OCI-LY7 (cell line): ENCODE measurements at regions of chr17 and their contacts with region 1.

Region 1: DNA sequence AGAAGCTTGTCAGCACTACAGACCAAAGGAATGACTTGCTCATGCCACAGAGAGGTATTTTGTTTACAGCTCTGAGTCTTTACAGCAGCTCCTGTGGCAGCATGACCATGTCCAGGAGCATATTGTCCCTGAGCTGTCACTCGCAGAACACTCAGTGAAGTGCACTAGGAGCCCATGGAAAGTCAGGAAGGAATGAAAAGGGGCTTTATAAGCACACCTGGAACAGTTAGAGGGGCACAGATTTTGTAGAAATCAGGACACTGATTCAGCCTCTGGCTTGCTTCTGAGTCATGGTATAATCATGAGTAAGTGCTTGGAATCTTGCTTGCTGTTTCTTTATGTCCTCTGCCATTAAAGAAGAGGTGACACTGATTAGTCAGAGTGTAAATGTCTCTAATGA is 41.0 kb downstream of the TADA2A start:
- DNase-seq: no peak
- H3K4me3 ChIP-seq: no peak overlapping the region
- H3K27ac ChIP-seq: no peak overlapping the region
- H3K4me1 ChIP-seq: no peaks in the 10 kb centered on the region
- CTCF ChIP-seq: no peak

Region 2: DNA sequence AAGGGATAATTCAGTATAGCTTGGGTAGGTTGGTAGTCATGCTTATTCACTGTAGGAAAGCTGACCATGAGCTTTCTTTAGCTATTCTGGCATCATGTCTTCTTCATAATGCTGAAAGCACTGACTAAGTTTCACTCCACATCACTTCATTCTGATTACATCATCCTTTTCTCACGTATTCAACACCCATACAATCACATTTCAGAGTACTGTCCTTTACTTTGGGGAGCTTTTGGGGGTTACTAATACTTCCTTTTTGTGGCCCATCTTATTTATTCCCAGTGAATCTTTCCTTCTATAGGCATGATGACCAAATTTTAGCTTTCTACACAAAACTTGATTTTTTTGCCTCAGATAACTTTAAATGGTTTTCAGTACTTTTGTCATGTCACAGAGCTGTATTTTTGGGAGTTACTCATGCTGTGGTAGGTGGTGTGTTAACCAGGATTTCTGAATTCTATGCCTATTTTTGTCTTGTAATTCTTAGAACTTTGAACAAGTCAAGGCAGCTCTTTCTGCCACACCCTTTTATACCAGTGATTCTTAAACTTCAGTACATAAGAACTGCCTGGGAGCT is 17.5 kb before region 1 on chr17:
- CTCF ChIA-PET with region 1: no interaction called
- POLR2A ChIA-PET with region 1: interaction called, 10 read pairs
- intact Hi-C with region 1: no loop called
- DNase-seq: no peak
- H3K4me3 ChIP-seq: no peak overlapping the region
- H3K27ac ChIP-seq: no peak overlapping the region
- H3K4me1 ChIP-seq: no peaks in the 10 kb centered on the region
- CTCF ChIP-seq: no peak

Region 3: DNA sequence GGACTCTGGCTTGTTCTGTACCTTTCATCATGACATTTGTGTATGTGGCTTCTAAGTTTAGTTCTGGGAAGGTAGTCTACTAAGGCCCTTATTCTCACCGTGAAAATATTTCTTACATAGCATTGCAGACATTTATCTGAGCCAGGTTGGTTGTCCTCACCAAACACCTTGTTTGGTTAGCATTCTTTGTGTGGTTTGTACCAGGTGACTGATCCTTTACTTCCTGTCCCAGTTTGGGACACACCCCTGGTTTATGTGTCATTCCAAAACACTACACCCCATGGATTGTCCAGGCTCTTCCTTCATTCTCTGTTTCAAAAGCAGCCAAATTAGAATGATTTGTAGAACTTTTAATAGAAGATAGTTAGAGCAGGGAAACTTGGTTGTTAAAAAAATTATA is 18.8 kb after region 1 on chr17:
- CTCF ChIA-PET with region 1: no interaction called
- POLR2A ChIA-PET with region 1: no interaction called
- intact Hi-C with region 1: no loop called
- DNase-seq: no peak
- H3K4me3 ChIP-seq: no peak overlapping the region
- H3K27ac ChIP-seq: no peak overlapping the region
- H3K4me1 ChIP-seq: no peaks in the 10 kb centered on the region
- CTCF ChIP-seq: no peak